Mammary epithelial cell (primary cell): ENCODE measurements at regions of chr3 and their contacts with region 1.

Region 1: DNA sequence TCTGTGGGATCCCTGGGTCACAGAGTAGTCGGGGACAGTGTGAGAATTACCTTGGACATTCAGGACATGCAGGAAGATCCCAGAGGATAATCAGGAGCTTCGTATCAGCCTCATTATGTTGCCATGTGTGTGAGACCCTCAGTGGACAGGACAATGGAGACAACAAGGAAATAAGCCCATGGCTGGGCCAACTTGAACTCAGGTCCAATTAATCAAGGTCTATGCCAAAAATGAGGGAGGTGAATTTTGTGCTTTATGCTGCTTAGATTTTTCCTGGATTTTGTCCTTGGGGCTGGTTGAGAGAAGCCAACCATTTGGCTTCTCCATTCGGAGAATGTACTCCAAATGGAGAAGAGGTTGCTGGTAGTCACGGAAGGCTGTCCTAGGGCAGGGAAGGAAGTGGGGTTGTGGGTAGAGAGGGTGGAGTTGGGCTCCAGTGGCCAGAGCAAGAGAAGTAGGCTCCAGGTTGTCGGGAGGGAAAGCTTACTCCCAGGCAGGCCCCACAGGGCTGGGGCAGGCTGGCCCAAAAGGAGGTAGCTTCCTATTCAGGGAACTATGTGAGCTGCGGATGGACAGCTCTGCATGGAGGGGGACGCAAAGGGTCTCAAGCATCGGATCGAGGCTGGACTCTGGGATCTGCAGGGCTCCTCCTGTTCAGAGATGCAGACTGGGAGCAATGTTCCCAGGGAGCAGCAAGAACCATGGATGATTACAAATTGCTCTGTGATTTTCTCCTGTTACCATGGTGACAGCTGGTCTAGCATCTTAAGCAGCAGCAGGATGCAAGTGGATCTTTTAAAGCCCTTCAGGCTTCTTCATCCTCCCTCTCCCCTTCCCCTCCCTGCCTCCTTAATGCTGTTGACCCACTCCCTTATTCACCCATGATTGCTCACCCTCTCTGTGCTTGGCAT is 91.1 kb downstream of the WNT7A start:
- DNase-seq: no peak
- H3K4me3 ChIP-seq: no peak overlapping the region
- H3K27ac ChIP-seq: no peak overlapping the region
- H3K4me1 ChIP-seq: no peaks in the 10 kb centered on the region
- H3K27me3 ChIP-seq: no peaks in the 10 kb centered on the region
- CTCF ChIP-seq: no peak

Region 2: DNA sequence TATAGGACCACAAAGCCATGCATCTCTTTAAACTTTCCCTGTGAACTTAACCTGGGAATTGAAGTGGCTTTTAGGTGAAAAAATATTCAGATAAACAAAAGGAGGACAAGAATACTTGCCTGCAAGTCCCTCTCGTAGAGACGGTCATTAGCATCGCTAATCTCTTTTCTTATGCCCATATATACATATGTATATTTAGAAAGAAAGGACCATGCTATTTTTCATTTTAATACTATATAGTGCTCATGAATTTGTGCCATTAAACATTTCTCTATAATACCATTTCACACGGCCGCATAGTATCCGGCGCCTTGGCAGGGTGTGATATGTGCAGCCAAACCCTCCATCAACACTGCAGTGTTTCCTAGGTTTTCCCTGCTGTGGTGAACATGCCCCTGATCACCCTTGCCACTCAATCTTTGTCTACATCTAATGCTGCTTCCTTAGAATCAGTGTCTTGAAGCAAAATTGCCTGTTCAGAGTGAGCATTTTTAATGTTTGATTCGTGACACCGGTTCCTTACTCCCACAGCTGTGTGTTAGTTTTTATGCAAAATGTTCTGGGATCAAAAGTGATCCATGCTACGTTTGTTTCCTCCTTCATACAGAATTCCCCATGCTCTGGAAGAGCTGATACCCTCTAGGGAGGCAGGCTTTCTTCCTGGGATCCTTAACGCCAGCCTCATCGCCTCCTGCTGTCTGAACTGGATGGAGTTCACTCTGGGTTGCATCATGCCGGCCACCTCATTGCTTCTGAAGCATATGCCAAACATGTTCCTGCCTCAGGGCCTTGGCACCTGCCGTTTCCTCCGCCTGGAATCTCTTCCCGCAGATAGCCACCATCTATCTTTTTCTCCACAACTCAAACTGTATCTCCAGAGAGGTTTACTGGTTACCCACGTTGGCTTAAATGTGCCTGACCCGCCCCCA is 121.7 kb before region 1 on chr3:
- CTCF ChIA-PET with region 1: no interaction called
- dilution Hi-C with region 1: loop called (anchors 5 kb)
- in situ Hi-C with region 1: no loop called
- intact Hi-C with region 1: no loop called
- DNase-seq: peak; percentile 39
- H3K4me3 ChIP-seq: no peak overlapping the region
- H3K27ac ChIP-seq: no peak overlapping the region
- H3K4me1 ChIP-seq: peaks cover 3% of the 10 kb centered on the region
- H3K27me3 ChIP-seq: peaks cover 3% of the 10 kb centered on the region
- CTCF ChIP-seq: peak in 1 of 2 donors; percentile 26

Region 3: GRCh38 chr3:13740795-13741194 is 48.0 kb before region 1 on chr3:
- CTCF ChIA-PET with region 1: no interaction called
- dilution Hi-C with region 1: loop called (anchors 5 kb)
- in situ Hi-C with region 1: no loop called
- intact Hi-C with region 1: loop called (anchors 1 kb)
- DNase-seq: no peak
- H3K4me3 ChIP-seq: no peak overlapping the region
- H3K27ac ChIP-seq: no peak overlapping the region
- H3K4me1 ChIP-seq: no peaks in the 10 kb centered on the region
- H3K27me3 ChIP-seq: no peaks in the 10 kb centered on the region
- CTCF ChIP-seq: no peak

Region 4: GRCh38 chr3:13748276-13748879 is 40.4 kb before region 1 on chr3:
- CTCF ChIA-PET with region 1: no interaction called
- dilution Hi-C with region 1: no loop called
- in situ Hi-C with region 1: no loop called
- intact Hi-C with region 1: loop called (anchors 1 kb)
- DNase-seq: no peak
- H3K4me3 ChIP-seq: no peak overlapping the region
- H3K27ac ChIP-seq: no peak overlapping the region
- H3K4me1 ChIP-seq: no peaks in the 10 kb centered on the region
- H3K27me3 ChIP-seq: no peaks in the 10 kb centered on the region
- CTCF ChIP-seq: no peak

Region 5: DNA sequence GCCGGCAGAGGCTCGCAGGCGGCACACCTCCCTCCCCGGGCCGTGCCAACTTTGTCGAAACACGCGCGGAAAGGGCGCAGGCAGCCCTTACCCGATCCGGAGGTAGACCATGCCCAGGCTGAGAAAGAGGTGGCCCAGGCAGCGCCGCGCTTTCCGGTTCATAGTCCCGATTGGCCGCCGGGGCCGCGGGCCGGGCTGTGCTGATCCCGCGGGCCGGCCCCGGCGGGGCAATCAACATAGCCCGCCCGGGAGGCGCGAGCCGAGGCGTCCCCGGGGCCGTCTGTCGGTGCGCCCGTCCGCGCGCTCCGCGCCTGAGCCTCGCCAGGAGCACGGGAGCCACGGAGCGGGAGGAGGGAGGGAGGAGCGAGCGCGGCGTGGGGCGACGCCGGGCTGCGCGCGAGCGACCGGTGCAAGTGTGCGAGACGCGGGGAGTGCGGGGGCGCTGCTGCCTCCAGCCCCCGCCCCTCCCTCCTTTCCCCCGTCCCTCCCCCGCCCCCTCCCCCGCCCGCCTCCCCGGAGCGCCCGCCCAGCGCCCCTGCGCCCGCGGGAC is 91.0 kb after region 1 on chr3 and contains the start of gene WNT7A:
- CTCF ChIA-PET with region 1: no interaction called
- dilution Hi-C with region 1: loop called (anchors 5 kb)
- in situ Hi-C with region 1: no loop called
- intact Hi-C with region 1: no loop called
- DNase-seq: peak; percentile 47
- H3K4me3 ChIP-seq: peak within 1 kb of the TSS; percentile 64 to 82 (median 69)
- H3K27ac ChIP-seq: no peak within 1 kb of the TSS
- H3K4me1 ChIP-seq: peaks cover 15% of the 10 kb centered on the region
- H3K27me3 ChIP-seq: no peaks in the 10 kb centered on the region
- CTCF ChIP-seq: no peak
- total RNA-seq, gene WNT7A: 0.67 to 19.9 TPM